ENCODE measurements at regions of chr3 and their contacts with region 1.

Region 1: GRCh38 chr3:69226076-69226475 is 103.7 kb upstream of the LMOD3 start:
- DNase-seq: peak in 1 of 2 experiments; percentile 81
- H3K4me3 ChIP-seq: peak overlapping the region; percentile 34; the same call in 1 of the 2 replicates
- H3K27ac ChIP-seq: peak overlapping the region; percentile 94
- H3K4me1 ChIP-seq: peaks cover 57% of the 10 kb centered on the region
- H3K27me3 ChIP-seq: no peaks in the 10 kb centered on the region
- CTCF ChIP-seq: no peak

Region 2: DNA sequence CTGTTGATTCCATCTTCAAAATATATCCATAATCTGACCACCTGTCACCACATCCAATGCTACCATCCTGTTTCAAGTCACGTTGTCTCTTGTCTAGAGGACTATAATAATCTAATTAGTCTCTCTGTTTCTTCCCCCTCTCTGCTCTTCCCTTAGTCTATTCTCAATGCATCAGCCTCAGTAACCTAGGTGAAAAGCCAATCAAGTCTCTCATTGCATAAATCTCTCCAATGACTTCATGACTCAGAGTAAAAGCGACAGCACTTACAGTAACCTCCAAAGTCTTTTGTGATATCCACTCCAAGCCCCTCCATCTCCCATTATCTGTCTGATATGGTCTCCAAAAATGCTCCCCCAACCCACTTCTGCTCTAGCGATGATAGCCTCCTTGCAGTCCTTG is 153.1 kb before region 1 on chr3:
- CTCF ChIA-PET with region 1: no interaction called
- POLR2A ChIA-PET with region 1: no interaction called
- intact Hi-C with region 1: no loop called
- DNase-seq: no peak
- H3K4me3 ChIP-seq: no peak overlapping the region
- H3K27ac ChIP-seq: no peak overlapping the region
- H3K4me1 ChIP-seq: peaks cover under 1% of the 10 kb centered on the region; the same call in 1 of the 2 replicates
- H3K27me3 ChIP-seq: no peaks in the 10 kb centered on the region
- CTCF ChIP-seq: no peak

Region 3: GRCh38 chr3:69212411-69213139 is 13.5 kb before region 1 on chr3:
- CTCF ChIA-PET with region 1: interaction called, 6 read pairs
- POLR2A ChIA-PET with region 1: no interaction called
- intact Hi-C with region 1: loop called (anchors 1 kb)
- DNase-seq: peak in 1 of 2 experiments; percentile 95
- H3K4me3 ChIP-seq: no peak overlapping the region
- H3K27ac ChIP-seq: peak overlapping the region; percentile 97
- H3K4me1 ChIP-seq: peaks cover 45% of the 10 kb centered on the region
- H3K27me3 ChIP-seq: no peaks in the 10 kb centered on the region
- CTCF ChIP-seq: no peak